Psoas muscle (tissue), 8 donors: ENCODE measurements at regions of chrX and their contacts with region 1.

Region 1: GRCh38 chrX:20362268-20363267 is 95.9 kb upstream of the RPS6KA3 start:
- DNase-seq: no peak
- ATAC-seq: peak; percentile 77 to 89 (median 86)
- H3K4me3 ChIP-seq: peak overlapping the region; percentile 37
- H3K27ac ChIP-seq: peak overlapping the region; percentile 84
- H3K4me1 ChIP-seq: peaks cover 23% of the 10 kb centered on the region
- H3K27me3 ChIP-seq: peaks cover 0 to 5% (median 0%) of the 10 kb centered on the region in 3 donors
- CTCF ChIP-seq: no peak

Region 2: DNA sequence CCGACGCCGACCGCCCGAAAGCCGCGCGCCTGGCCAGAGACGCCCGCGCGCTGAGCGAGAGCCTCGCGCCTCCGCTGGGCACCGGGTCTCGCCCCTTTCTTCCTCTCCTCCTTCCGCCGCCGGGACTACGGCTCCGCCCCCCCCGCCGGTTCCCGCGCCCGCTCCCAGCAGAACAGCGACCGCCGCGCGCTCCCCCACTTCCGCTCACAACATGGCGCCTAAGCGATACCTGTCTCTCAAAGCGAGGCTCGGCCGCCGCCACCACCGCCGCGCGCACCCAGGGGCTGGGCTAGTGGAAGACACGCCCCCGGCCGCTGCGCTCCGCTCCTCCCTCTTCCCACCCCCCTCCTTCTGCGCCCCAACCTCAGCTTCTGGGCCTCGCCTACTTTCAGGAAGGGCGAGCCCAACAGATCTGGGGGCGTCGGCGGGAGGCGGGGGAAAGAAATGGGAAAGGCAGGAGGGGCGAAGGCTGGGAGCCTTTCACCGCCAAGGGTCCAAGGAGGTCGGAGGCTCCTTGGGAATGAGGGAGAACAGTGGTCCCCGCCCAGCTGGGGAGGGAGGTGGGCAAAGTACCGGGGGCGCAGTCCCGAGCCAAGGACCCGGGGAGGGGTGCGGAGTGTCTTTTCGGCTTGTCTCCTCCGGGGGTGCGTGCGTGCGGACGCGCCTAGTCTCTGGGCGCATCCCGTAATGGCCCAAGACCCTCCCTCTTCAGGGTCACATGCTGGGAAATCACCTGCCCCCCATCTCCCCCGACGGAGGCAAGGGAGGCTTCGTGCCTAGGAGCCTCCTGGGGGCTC is 95.6 kb before region 1 on chrX and contains the start of gene RPS6KA3:
- intact Hi-C with region 1: loop called in 1 of 2 experiments (anchors 5 kb)
- DNase-seq: peak; percentile 88 to 94
- ATAC-seq: peak; percentile 88 to 93 (median 90)
- H3K4me3 ChIP-seq: peak within 1 kb of the TSS; percentile 74
- H3K27ac ChIP-seq: peak within 1 kb of the TSS; percentile 89
- H3K4me1 ChIP-seq: peaks cover 7% of the 10 kb centered on the region
- H3K27me3 ChIP-seq: no peaks in the 10 kb centered on the region
- CTCF ChIP-seq: no peak
- total RNA-seq, gene RPS6KA3: 56.4 to 91.9 (median 77.2) TPM

Region 3: DNA sequence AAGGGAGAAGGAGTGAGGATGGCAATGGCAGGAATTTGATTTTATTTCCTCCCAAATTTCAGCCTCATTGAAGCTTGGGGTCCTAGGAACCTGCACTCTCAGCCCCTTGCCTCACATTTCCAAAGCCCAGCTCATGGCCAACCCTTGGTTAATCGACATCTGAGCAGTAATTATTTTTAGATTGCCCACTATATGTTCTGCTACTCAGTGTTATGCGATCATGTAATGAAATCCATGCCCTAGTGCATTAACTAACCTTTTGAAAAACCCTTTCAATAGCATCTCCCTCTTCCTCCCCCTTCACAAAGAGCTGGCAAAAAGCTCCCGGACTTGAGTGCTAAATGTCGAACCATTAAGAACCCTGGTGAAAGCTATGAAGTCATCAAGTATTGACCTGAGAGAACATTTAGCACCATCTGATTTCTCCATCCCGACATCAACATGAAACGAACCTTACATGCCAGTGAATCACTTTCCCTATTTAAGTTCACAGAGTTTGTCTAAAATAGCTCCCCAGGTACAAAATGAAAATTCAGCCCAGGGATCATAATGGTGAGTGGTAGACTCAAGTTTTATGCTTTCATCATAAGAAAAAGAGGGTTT is 36.7 kb before region 1 on chrX:
- intact Hi-C with region 1: loop called in 1 of 2 experiments (anchors 5 kb)
- DNase-seq: no peak
- ATAC-seq: peak; percentile 82 to 94 (median 92)
- H3K4me3 ChIP-seq: no peak overlapping the region
- H3K27ac ChIP-seq: peak overlapping the region; percentile 66
- H3K4me1 ChIP-seq: no peaks in the 10 kb centered on the region
- H3K27me3 ChIP-seq: peaks cover 0 to 2% (median 0%) of the 10 kb centered on the region in 3 donors
- CTCF ChIP-seq: no peak

Region 4: DNA sequence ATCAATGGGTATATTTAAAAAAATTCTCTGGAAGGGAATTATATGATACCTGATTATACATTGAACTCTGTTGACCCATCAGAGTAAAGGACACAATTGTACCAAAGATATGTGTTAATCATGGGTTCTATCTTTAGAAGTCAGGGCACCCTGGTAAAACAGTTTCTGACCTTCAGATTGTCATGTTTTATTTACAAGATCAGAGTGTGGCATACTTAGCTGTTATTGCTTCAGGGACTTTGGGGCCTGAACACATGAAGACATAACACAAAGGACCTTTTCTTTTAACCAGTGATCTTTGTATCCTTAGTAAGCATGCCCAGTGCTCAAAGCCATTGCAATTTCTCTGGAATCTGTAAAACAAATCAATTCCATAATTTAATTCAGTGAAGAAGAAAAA is 108.9 kb after region 1 on chrX:
- intact Hi-C with region 1: no loop called
- DNase-seq: no peak
- ATAC-seq: peak in 2 of 4 donors; percentile 46 to 50
- H3K4me3 ChIP-seq: no peak overlapping the region
- H3K27ac ChIP-seq: no peak overlapping the region
- H3K4me1 ChIP-seq: no peaks in the 10 kb centered on the region
- H3K27me3 ChIP-seq: no peaks in the 10 kb centered on the region
- CTCF ChIP-seq: no peak